ENCODE measurements at regions of chr1 and their contacts with region 1.

Region 1: GRCh38 chr1:44842862-44843655 is at the start of gene PTCH2:
- DNase-seq: peak; percentile 67 to 84 (median 77)
- ATAC-seq: peak; percentile 74 to 96 (median 91)
- H3K4me3 ChIP-seq: peak within 1 kb of the TSS; percentile 14 to 74 (median 62)
- H3K27ac ChIP-seq: peak within 1 kb of the TSS in 9 of 12 donors; percentile 35 to 75 (median 62)
- H3K4me1 ChIP-seq: peaks cover 0 to 14% (median 7%) of the 10 kb centered on the region in 12 donors
- H3K27me3 ChIP-seq: peaks cover 0 to 8% (median 0%) of the 10 kb centered on the region in 9 donors
- CTCF ChIP-seq: no peak
- POLR2A ChIP-seq: no peak
- total RNA-seq, gene PTCH2: 0.21 to 0.85 (median 0.41) TPM in 8 of 9 donors, not detected in the other

Region 2: DNA sequence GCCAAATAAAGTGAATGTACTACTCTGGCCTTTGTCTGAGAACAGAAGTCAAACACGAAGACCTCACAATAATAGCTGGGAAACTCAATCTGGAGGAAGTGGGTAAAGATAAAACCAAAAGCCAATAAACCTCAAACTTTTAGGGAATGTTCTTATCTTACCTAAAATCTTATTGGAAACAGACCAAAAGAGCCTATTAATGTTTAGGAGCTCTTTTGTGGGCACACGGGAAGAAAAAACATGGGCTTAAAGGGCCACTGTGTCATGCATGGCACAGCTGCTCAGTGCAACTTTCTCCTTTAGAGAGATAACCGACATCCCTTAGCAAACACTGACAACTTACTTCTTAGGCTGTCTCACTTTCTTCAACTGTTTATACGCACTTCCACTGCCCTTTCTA is 127.3 kb after region 1 on chr1:
- intact Hi-C with region 1: loop called in 1 of 10 experiments (anchors 10 kb)
- DNase-seq: no peak
- ATAC-seq: no peak
- H3K4me3 ChIP-seq: no peak overlapping the region
- H3K27ac ChIP-seq: no peak overlapping the region
- H3K4me1 ChIP-seq: peaks cover 0 to 6% (median 0%) of the 10 kb centered on the region in 12 donors
- H3K27me3 ChIP-seq: no peaks in the 10 kb centered on the region
- CTCF ChIP-seq: no peak
- POLR2A ChIP-seq: no peak

Region 3: DNA sequence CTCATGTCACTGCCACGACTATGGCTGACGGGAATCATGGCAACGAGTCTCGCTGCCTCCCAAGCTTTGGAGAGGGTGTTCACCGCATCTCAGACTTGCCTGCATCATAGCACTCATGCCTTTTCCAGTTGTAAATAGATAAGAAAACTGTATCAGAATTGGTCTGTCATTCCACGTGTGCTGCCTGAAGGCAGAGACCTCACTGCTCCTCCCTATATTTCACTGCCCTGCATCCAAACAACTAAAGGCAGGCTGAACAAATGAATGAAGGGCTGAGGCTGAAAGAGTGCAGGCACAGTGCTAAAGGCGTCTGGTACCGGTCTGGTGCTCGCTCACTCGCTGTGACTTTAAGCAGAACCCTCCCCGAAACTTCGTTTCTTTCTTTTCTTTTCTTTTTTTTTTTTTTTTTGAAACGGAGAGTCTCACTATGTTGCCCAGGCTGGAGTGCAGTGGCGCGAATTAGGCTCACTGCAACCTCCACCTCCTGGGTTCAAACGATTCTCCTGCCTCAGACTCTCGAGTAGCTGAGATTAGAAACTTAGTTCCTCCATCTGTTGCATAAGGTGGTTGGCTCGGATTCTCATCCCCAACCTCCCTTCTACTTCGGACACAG is 142.8 kb after region 1 on chr1:
- intact Hi-C with region 1: loop called in 3 of 10 experiments (anchors 5 to 10 kb)
- DNase-seq: no peak
- ATAC-seq: peak in 2 of 4 donors; percentile 18 to 63
- H3K4me3 ChIP-seq: peak overlapping the region; percentile 54 to 92 (median 74)
- H3K27ac ChIP-seq: peak overlapping the region in 11 of 12 donors; percentile 39 to 84 (median 78)
- H3K4me1 ChIP-seq: peaks cover 2 to 23% (median 10%) of the 10 kb centered on the region in 12 donors
- H3K27me3 ChIP-seq: no peaks in the 10 kb centered on the region
- CTCF ChIP-seq: no peak
- POLR2A ChIP-seq: no peak

Measured in heart left ventricle (tissue), 16 donors.